ENCODE measurements at regions of chr1 and their contacts with region 1.

Region 1: GRCh38 chr1:103461161-103462105 is 64.1 kb upstream of the RNPC3 start:
- DNase-seq: no peak
- H3K4me3 Mint-ChIP-seq: no peak overlapping the region
- H3K27ac Mint-ChIP-seq: no peak overlapping the region
- H3K4me1 Mint-ChIP-seq: no peaks in the 10 kb centered on the region
- H3K27me3 Mint-ChIP-seq: peaks cover 3% of the 10 kb centered on the region

Region 2: GRCh38 chr1:102970498-102971078 is 490.8 kb before region 1 on chr1:
- intact Hi-C with region 1: loop called (anchors 10 kb)
- DNase-seq: no peak
- H3K4me3 Mint-ChIP-seq: no peak overlapping the region
- H3K27ac Mint-ChIP-seq: no peak overlapping the region
- H3K4me1 Mint-ChIP-seq: no peaks in the 10 kb centered on the region
- H3K27me3 Mint-ChIP-seq: no peaks in the 10 kb centered on the region

Region 3: GRCh38 chr1:103106426-103107341 is 354.7 kb before region 1 on chr1:
- intact Hi-C with region 1: loop called (anchors 1 kb)
- DNase-seq: no peak
- H3K4me3 Mint-ChIP-seq: no peak overlapping the region
- H3K27ac Mint-ChIP-seq: no peak overlapping the region
- H3K4me1 Mint-ChIP-seq: no peaks in the 10 kb centered on the region
- H3K27me3 Mint-ChIP-seq: peaks cover 24% of the 10 kb centered on the region